CD8-positive, alpha-beta T cell (primary cell): ENCODE measurements at regions of chr19 and their contacts with region 1.

Region 1: GRCh38 chr19:57914531-57914930 is 1.9 kb downstream of the ZNF417 start:
- DNase-seq: no peak
- ATAC-seq: no peak
- H3K4me3 ChIP-seq: no peak overlapping the region
- H3K4me3 Mint-ChIP-seq: peak overlapping the region; percentile 92
- H3K27ac ChIP-seq: no peak overlapping the region
- H3K27ac Mint-ChIP-seq: peak overlapping the region; percentile 49
- H3K4me1 ChIP-seq: peaks cover 12% of the 10 kb centered on the region
- H3K4me1 Mint-ChIP-seq: peaks cover 43% of the 10 kb centered on the region
- H3K27me3 ChIP-seq: no peaks in the 10 kb centered on the region
- H3K27me3 Mint-ChIP-seq: no peaks in the 10 kb centered on the region
- CTCF ChIP-seq: no peak

Region 2: GRCh38 chr19:57559404-57560025 is 355.0 kb before region 1 on chr19 and contains the start of gene ZNF550:
- CTCF ChIA-PET with region 1: no interaction called
- POLR2A ChIA-PET with region 1: no interaction called
- intact Hi-C with region 1: loop called in 1 of 2 experiments (anchors 1 kb)
- DNase-seq: peak; percentile 74 to 92 (median 88)
- ATAC-seq: peak; percentile 96
- H3K4me3 ChIP-seq: peak within 1 kb of the TSS; percentile 77 to 89
- H3K4me3 Mint-ChIP-seq: peak within 1 kb of the TSS; percentile 98
- H3K27ac ChIP-seq: peak within 1 kb of the TSS; percentile 64 to 70
- H3K27ac Mint-ChIP-seq: peak within 1 kb of the TSS; percentile 96
- H3K4me1 ChIP-seq: peaks cover 20% of the 10 kb centered on the region
- H3K4me1 Mint-ChIP-seq: peaks cover 32% of the 10 kb centered on the region
- H3K27me3 ChIP-seq: no peaks in the 10 kb centered on the region
- H3K27me3 Mint-ChIP-seq: no peaks in the 10 kb centered on the region
- CTCF ChIP-seq: no peak
- total RNA-seq, gene ZNF550: 15.4 to 17.6 TPM

Region 3: GRCh38 chr19:57807534-57807933 is 107.0 kb before region 1 on chr19:
- CTCF ChIA-PET with region 1: no interaction called
- POLR2A ChIA-PET with region 1: no interaction called
- intact Hi-C with region 1: no loop called
- DNase-seq: no peak
- ATAC-seq: no peak
- H3K4me3 ChIP-seq: no peak overlapping the region
- H3K4me3 Mint-ChIP-seq: no peak overlapping the region
- H3K27ac ChIP-seq: no peak overlapping the region
- H3K27ac Mint-ChIP-seq: no peak overlapping the region
- H3K4me1 ChIP-seq: peaks cover 8% of the 10 kb centered on the region
- H3K4me1 Mint-ChIP-seq: peaks cover 46% of the 10 kb centered on the region
- H3K27me3 ChIP-seq: no peaks in the 10 kb centered on the region
- H3K27me3 Mint-ChIP-seq: no peaks in the 10 kb centered on the region
- CTCF ChIP-seq: no peak

Region 4: DNA sequence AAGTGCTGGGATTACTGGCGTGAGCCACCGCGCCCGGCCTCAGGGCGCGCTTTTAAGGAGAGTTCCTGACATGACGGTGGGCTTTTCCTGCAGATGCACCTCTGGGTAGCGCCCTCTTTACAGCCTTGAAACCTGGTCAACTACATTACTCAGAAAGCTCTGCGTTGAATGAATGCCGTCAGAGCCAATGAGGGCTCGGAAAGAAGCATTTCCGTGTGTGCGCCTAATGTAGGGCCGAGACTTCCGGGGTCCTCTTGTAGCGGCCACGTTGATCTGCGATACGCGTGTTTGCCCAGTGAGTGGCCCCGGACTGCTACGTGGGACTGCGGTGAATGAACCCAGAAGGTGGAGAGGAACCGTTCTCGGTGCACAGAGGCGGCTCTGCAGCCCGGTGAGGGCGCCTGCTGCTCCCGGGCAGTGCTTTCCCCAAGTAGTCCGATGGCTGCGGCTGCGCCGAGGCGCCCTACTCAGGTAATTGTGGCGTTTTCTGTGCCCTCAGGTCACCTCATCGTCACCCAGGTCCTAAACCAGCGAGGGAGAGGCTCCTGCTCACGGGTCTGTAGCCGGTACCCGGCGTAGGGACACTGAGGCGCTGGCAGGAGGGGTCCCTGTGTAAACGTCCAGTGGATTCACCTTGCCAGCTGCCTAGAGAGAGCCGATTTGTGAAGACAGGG is 94.9 kb before region 1 on chr19:
- CTCF ChIA-PET with region 1: no interaction called
- POLR2A ChIA-PET with region 1: interaction called, 3 read pairs
- intact Hi-C with region 1: loop called in 1 of 2 experiments (anchors 1 kb)
- DNase-seq: peak; percentile 60 to 95 (median 81)
- ATAC-seq: peak; percentile 83
- H3K4me3 ChIP-seq: peak overlapping the region; percentile 57 to 85
- H3K4me3 Mint-ChIP-seq: peak overlapping the region; percentile 96
- H3K27ac ChIP-seq: peak overlapping the region; percentile 81 to 89
- H3K27ac Mint-ChIP-seq: peak overlapping the region; percentile 97
- H3K4me1 ChIP-seq: peaks cover 15% of the 10 kb centered on the region
- H3K4me1 Mint-ChIP-seq: peaks cover 63% of the 10 kb centered on the region
- H3K27me3 ChIP-seq: no peaks in the 10 kb centered on the region
- H3K27me3 Mint-ChIP-seq: no peaks in the 10 kb centered on the region
- CTCF ChIP-seq: no peak

Region 5: DNA sequence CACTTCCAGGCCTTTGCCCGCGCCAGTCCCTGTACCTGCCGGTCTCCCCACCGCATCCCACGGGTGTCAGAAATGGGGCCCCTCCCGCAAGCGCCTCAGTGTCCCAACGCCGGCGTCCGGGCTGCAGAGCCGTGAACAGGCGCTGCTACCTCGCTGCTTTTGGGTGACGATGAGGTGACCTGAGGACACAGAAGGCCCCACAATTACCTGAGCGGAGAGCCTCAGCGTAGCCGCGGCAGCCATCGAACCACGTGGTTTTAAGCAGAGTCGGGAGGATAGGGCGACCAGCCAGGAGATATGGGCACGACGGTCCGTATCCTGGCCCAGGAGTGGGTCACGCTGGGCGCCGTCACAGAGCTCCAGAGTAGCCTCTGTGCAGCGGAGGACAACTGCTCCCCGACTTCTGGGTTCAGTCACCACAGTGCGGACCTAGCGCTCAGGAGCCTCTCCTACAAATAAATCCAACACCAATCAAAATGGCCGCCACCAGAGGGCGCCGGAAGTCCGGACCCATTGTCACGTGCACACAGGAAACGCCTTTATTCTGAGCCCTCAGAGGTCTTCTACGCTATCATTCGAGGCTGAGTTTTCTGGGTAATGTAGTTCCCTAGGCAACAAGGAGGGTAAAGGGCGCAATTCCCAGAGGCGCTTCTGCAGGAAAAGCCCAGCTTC is 25.8 kb before region 1 on chr19 and contains the start of gene ZNF814:
- CTCF ChIA-PET with region 1: no interaction called
- POLR2A ChIA-PET with region 1: no interaction called
- intact Hi-C with region 1: loop called in 1 of 2 experiments (anchors 1 kb)
- DNase-seq: peak; percentile 66 to 87 (median 81)
- ATAC-seq: peak; percentile 93
- H3K4me3 ChIP-seq: peak within 1 kb of the TSS; percentile 73 to 83
- H3K4me3 Mint-ChIP-seq: peak within 1 kb of the TSS; percentile 93
- H3K27ac ChIP-seq: peak within 1 kb of the TSS; percentile 66 to 68
- H3K27ac Mint-ChIP-seq: peak within 1 kb of the TSS; percentile 87
- H3K4me1 ChIP-seq: peaks cover 3% of the 10 kb centered on the region
- H3K4me1 Mint-ChIP-seq: peaks cover 39% of the 10 kb centered on the region
- H3K27me3 ChIP-seq: no peaks in the 10 kb centered on the region
- H3K27me3 Mint-ChIP-seq: no peaks in the 10 kb centered on the region
- CTCF ChIP-seq: peak; percentile 19
- total RNA-seq, gene ZNF814: 43.9 to 48.2 TPM

Region 6: GRCh38 chr19:58002384-58003173 is 88.0 kb after region 1 on chr19 and contains the start of gene ZNF606:
- CTCF ChIA-PET with region 1: interaction called, 3 read pairs
- POLR2A ChIA-PET with region 1: interaction called, 5 read pairs
- intact Hi-C with region 1: loop called (anchors 1 to 2 kb)
- DNase-seq: peak; percentile 72 to 93 (median 84)
- ATAC-seq: peak; percentile 94
- H3K4me3 ChIP-seq: peak within 1 kb of the TSS; percentile 90 to 93
- H3K4me3 Mint-ChIP-seq: peak within 1 kb of the TSS; percentile 87
- H3K27ac ChIP-seq: peak within 1 kb of the TSS; percentile 82 to 93
- H3K27ac Mint-ChIP-seq: peak within 1 kb of the TSS; percentile 94
- H3K4me1 ChIP-seq: peaks cover 20% of the 10 kb centered on the region
- H3K4me1 Mint-ChIP-seq: peaks cover 34% of the 10 kb centered on the region
- H3K27me3 ChIP-seq: no peaks in the 10 kb centered on the region
- H3K27me3 Mint-ChIP-seq: no peaks in the 10 kb centered on the region
- CTCF ChIP-seq: no peak
- total RNA-seq, gene ZNF606: 11.2 to 13.0 TPM